Adrenal gland (tissue), 19 donors: ENCODE measurements at regions of chr3 and their contacts with region 1.

Region 1: GRCh38 chr3:34758630-34759261 is 880.6 kb upstream of the ARPP21 start:
- DNase-seq: no peak
- H3K4me3 ChIP-seq: no peak overlapping the region
- H3K27ac ChIP-seq: no peak overlapping the region
- H3K4me1 ChIP-seq: no peaks in the 10 kb centered on the region
- H3K27me3 ChIP-seq: no peaks in the 10 kb centered on the region
- CTCF ChIP-seq: no peak
- POLR2A ChIP-seq: no peak

Region 2: GRCh38 chr3:34292605-34293300 is 466.0 kb before region 1 on chr3:
- intact Hi-C with region 1: loop called in 1 of 2 experiments (anchors 5 kb)
- DNase-seq: no peak
- H3K4me3 ChIP-seq: no peak overlapping the region
- H3K27ac ChIP-seq: no peak overlapping the region
- H3K4me1 ChIP-seq: no peaks in the 10 kb centered on the region
- H3K27me3 ChIP-seq: no peaks in the 10 kb centered on the region
- CTCF ChIP-seq: no peak
- POLR2A ChIP-seq: no peak